ENCODE measurements at regions of chr1 and their contacts with region 1.

Region 1: DNA sequence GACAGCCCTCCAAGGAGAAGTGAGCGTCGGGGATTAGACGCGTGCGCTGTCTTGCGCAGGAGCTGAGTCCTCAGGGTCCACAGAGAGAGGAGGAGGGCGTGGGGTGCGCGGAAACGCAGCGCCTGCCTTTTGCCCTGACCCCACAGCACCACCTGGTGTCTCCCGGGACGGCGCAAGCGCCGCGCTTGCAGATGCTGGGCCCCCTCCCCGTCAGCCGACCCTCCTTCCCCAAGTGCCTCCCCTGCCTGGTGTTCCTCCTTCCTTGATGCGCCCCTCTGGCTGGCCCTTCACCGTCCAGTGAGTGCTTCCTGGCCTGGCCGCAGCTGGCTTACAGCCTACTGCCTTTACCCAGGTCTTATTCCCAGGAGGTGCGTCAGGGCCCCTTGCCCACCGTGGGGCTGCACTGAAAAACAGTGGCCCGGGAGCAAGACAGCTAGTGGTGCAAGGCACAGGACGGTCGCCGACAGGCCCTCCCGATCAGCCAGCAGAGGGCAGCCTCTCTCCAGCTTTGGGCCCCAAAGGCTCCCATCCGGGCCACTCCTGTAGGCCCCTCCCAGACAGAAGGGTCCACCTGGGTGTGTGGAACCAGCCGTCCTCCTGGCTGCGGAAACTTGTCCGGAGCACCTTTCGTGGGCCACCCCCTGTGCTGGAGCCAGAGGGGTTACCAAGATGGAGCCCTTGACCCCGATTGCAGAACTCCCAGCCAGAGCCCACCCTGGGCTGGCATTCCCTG is 12.9 kb upstream of the PHLDA3 start:
- DNase-seq: peak; percentile 85
- ATAC-seq: peak; percentile 82
- H3K4me3 Mint-ChIP-seq: peak overlapping the region; percentile 65
- H3K27ac Mint-ChIP-seq: no peak overlapping the region
- H3K4me1 Mint-ChIP-seq: peaks cover 21% of the 10 kb centered on the region
- H3K27me3 Mint-ChIP-seq: peaks cover 15% of the 10 kb centered on the region

Region 2: GRCh38 chr1:201436969-201437368 is 45.0 kb before region 1 on chr1:
- POLR2A ChIA-PET with region 1: no interaction called
- DNase-seq: no peak
- ATAC-seq: no peak
- H3K4me3 Mint-ChIP-seq: no peak overlapping the region
- H3K27ac Mint-ChIP-seq: no peak overlapping the region
- H3K4me1 Mint-ChIP-seq: peaks cover 6% of the 10 kb centered on the region
- H3K27me3 Mint-ChIP-seq: peaks cover 33% of the 10 kb centered on the region

Region 3: GRCh38 chr1:201468844-201469511 is 12.9 kb before region 1 on chr1 and contains the start of gene PHLDA3:
- POLR2A ChIA-PET with region 1: interaction called, 11 read pairs
- DNase-seq: peak; percentile 76
- ATAC-seq: peak; percentile 86
- H3K4me3 Mint-ChIP-seq: peak within 1 kb of the TSS; percentile 88
- H3K27ac Mint-ChIP-seq: peak within 1 kb of the TSS; percentile 83
- H3K4me1 Mint-ChIP-seq: peaks cover 17% of the 10 kb centered on the region
- H3K27me3 Mint-ChIP-seq: peaks cover 43% of the 10 kb centered on the region
- total RNA-seq, gene PHLDA3: 11.3 to 13.2 TPM

Region 4: DNA sequence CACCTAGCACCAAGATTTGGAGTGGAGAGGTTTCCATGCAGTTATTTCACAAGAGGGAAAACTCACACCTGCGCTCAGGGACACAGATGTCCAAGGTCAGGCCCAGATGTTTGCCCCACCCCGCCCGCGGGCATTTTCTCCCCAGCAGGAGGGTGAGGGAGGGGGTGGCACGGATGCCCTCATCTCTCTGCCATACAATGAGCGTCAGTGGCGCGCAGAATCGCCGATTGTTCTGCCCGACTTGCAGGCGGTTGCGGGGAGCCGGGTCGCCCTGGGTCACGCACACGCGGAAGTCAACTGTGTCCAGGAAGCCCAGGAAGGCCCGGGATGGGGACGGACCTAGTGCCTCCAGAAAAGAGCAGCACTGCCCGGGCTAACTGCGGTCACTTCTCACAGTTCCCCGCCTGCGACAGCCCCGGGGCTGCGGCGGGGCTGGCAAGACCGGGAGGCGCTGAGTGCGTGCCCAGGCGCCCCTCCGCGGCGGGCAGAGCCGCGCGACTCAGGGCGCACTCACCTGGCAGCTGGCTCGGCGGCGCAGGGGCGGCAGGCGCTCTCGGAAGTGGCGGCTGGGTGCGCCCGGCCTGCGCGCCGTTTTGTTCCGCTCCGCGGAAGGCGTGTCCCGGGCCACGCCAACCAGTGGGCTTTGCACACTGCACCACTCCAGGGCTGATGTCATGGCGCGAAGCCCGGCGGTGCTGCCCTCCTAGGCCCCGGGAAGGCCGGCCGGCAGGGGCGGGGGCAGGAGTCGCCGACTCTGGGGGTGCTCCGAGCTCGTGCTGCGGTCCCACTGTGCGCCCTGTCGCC is 24.8 kb after region 1 on chr1 and contains the start of gene CSRP1:
- POLR2A ChIA-PET with region 1: interaction called, 18 read pairs
- DNase-seq: peak; percentile 86
- ATAC-seq: peak; percentile 93
- H3K4me3 Mint-ChIP-seq: peak within 1 kb of the TSS; percentile 94
- H3K27ac Mint-ChIP-seq: peak within 1 kb of the TSS; percentile 88
- H3K4me1 Mint-ChIP-seq: peaks cover 49% of the 10 kb centered on the region
- H3K27me3 Mint-ChIP-seq: no peaks in the 10 kb centered on the region
- total RNA-seq, gene CSRP1: 61.2 to 66.0 TPM

Region 5: DNA sequence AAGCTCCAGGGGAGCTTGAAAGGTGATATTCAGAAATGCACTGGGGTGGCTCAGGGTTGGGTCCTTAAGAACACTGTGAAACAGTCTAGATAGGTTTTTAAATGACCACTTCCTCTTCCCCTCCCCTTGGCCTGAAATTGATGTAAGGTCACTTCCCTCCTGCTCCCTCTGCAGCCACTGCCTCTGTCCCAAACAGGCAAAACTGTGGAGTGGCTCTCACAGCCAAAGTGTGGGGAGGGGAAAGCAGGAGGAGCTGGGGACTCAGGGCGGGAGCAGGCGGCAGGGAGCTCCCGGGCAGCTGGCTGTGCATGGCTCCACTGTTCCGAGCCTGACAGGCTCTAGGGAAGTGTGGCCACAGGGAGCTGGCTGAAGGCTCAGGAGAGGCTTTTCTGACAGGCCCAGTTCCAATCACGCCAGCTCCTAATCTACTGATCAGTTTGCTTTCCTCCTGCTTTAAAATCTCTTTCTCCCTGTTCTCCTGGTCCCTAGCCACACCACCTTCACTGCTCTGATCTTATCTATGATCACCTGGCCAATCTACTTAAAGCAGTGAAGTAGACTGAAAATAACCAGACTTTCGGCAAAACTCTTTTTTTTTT is 30.1 kb after region 1 on chr1:
- POLR2A ChIA-PET with region 1: interaction called, 18 read pairs
- DNase-seq: no peak
- ATAC-seq: no peak
- H3K4me3 Mint-ChIP-seq: no peak overlapping the region
- H3K27ac Mint-ChIP-seq: no peak overlapping the region
- H3K4me1 Mint-ChIP-seq: peaks cover 38% of the 10 kb centered on the region
- H3K27me3 Mint-ChIP-seq: no peaks in the 10 kb centered on the region